ENCODE measurements at regions of chr11 and their contacts with region 1.

Region 1: DNA sequence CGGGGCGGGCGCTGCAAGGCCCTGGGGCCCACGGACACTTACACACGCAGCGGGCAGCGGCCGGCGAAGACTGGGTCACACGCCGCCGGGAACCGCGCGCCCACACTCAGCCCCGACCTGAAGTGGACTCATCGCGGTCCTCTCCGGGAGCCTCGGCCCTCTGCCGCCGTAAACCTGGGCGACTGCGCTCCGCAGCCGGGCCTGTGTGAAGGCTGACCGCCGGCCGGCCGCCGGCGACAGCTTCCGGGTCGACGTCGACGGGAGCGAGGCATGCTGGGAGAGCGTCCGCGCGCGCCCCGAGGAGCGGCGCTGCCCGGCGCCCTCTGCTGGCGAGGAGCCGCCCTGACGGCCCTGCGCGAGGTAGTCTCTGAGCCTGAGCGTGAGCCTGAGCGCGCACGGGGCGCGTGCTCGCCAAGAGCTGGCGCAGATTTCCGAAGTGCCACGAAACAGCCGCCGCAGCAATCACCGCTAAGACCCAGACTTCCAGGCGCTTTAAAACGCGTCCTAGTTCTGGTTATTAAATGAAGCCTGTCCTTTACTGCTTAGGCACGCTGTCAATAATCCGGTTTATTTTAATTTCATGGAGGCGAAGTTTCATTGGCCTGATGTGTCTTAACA is at the start of gene SNX19:
- DNase-seq: peak; percentile 91 to 98
- H3K4me3 ChIP-seq: peak within 1 kb of the TSS; percentile 91
- H3K4me3 Mint-ChIP-seq: peak within 1 kb of the TSS; percentile 77
- H3K27ac Mint-ChIP-seq: peak within 1 kb of the TSS; percentile 21
- H3K4me1 ChIP-seq: peaks cover 5% of the 10 kb centered on the region; the same call in 1 of the 2 replicates
- H3K4me1 Mint-ChIP-seq: peaks cover 7% of the 10 kb centered on the region
- H3K27me3 ChIP-seq: no peaks in the 10 kb centered on the region
- H3K27me3 Mint-ChIP-seq: peaks cover 13% of the 10 kb centered on the region
- CTCF ChIP-seq: peak; percentile 94 to 99
- total RNA-seq, gene SNX19: 79.8 and 82.4 TPM in 2 replicates

Region 2: GRCh38 chr11:130476200-130476921 is 440.0 kb before region 1 on chr11:
- CTCF ChIA-PET with region 1: no interaction called
- POLR2A ChIA-PET with region 1: no interaction called
- intact Hi-C with region 1: no loop called
- DNase-seq: peak in 1 of 2 experiments; percentile 30
- H3K4me3 ChIP-seq: no peak overlapping the region
- H3K4me3 Mint-ChIP-seq: no peak overlapping the region
- H3K27ac Mint-ChIP-seq: no peak overlapping the region
- H3K4me1 ChIP-seq: peaks cover 8% of the 10 kb centered on the region; the same call in 1 of the 2 replicates
- H3K4me1 Mint-ChIP-seq: no peaks in the 10 kb centered on the region
- H3K27me3 ChIP-seq: no peaks in the 10 kb centered on the region; the same call in 1 of the 2 replicates
- H3K27me3 Mint-ChIP-seq: peaks cover 2% of the 10 kb centered on the region
- CTCF ChIP-seq: no peak

Region 3: GRCh38 chr11:130872981-130873380 is 43.4 kb before region 1 on chr11:
- CTCF ChIA-PET with region 1: no interaction called
- POLR2A ChIA-PET with region 1: no interaction called
- intact Hi-C with region 1: no loop called
- DNase-seq: no peak
- H3K4me3 ChIP-seq: no peak overlapping the region
- H3K4me3 Mint-ChIP-seq: no peak overlapping the region
- H3K27ac Mint-ChIP-seq: no peak overlapping the region
- H3K4me1 ChIP-seq: no peaks in the 10 kb centered on the region
- H3K4me1 Mint-ChIP-seq: no peaks in the 10 kb centered on the region
- H3K27me3 ChIP-seq: no peaks in the 10 kb centered on the region
- H3K27me3 Mint-ChIP-seq: no peaks in the 10 kb centered on the region
- CTCF ChIP-seq: no peak

Region 4: GRCh38 chr11:130904380-130904779 is 12.0 kb before region 1 on chr11:
- CTCF ChIA-PET with region 1: interaction called, 16 read pairs
- POLR2A ChIA-PET with region 1: no interaction called
- intact Hi-C with region 1: no loop called
- DNase-seq: no peak
- H3K4me3 ChIP-seq: no peak overlapping the region
- H3K4me3 Mint-ChIP-seq: no peak overlapping the region
- H3K27ac Mint-ChIP-seq: no peak overlapping the region
- H3K4me1 ChIP-seq: no peaks in the 10 kb centered on the region; the same call in 1 of the 2 replicates
- H3K4me1 Mint-ChIP-seq: no peaks in the 10 kb centered on the region
- H3K27me3 ChIP-seq: no peaks in the 10 kb centered on the region
- H3K27me3 Mint-ChIP-seq: no peaks in the 10 kb centered on the region
- CTCF ChIP-seq: peak; percentile 61 to 63

Measured in Caco-2 (cell line).